Activated CD8-positive, alpha-beta T cell treated with anti-CD3 and anti-CD28 coated beads for 36 hours (primary cell): ENCODE measurements at regions of chr5 and their contacts with region 1.

Region 1: GRCh38 chr5:138128334-138128733 is 10.9 kb downstream of the NME5 start:
- DNase-seq: no peak
- ATAC-seq: no peak
- H3K4me3 Mint-ChIP-seq: no peak overlapping the region
- H3K27ac Mint-ChIP-seq: no peak overlapping the region
- H3K4me1 Mint-ChIP-seq: no peaks in the 10 kb centered on the region
- H3K27me3 Mint-ChIP-seq: peaks cover 2% of the 10 kb centered on the region
- CTCF ChIP-seq: no peak

Region 2: DNA sequence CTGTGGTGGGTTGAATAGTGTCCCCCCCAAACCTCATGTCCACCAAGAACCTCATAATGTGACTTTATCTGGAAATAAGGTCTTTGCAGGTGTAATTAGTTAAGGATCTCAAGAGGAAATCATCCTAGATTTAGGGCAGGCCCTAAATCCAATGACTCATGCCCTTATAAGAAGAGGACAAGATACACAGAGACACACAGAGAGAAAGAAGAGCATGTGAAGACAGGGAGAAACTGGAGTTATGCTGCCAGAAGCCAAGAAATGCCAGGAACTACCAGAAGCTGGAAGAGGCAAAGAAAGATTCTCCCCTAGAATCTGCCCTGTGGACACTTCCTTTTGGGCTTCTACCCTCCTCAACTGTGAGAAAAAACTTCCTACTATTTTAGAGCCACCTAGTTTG is 104.2 kb before region 1 on chr5:
- CTCF ChIA-PET with region 1: no interaction called
- POLR2A ChIA-PET with region 1: no interaction called
- intact Hi-C with region 1: no loop called
- DNase-seq: no peak
- ATAC-seq: no peak
- H3K4me3 Mint-ChIP-seq: no peak overlapping the region
- H3K27ac Mint-ChIP-seq: peak overlapping the region; percentile 4
- H3K4me1 Mint-ChIP-seq: peaks cover 63% of the 10 kb centered on the region
- H3K27me3 Mint-ChIP-seq: no peaks in the 10 kb centered on the region
- CTCF ChIP-seq: no peak

Region 3: GRCh38 chr5:138149530-138149929 is 21.2 kb after region 1 on chr5:
- CTCF ChIA-PET with region 1: interaction called, 13 read pairs
- POLR2A ChIA-PET with region 1: no interaction called
- intact Hi-C with region 1: no loop called
- DNase-seq: no peak
- ATAC-seq: no peak
- H3K4me3 Mint-ChIP-seq: no peak overlapping the region
- H3K27ac Mint-ChIP-seq: no peak overlapping the region
- H3K4me1 Mint-ChIP-seq: no peaks in the 10 kb centered on the region
- H3K27me3 Mint-ChIP-seq: no peaks in the 10 kb centered on the region
- CTCF ChIP-seq: no peak

Region 4: GRCh38 chr5:138159666-138160065 is 31.3 kb after region 1 on chr5:
- CTCF ChIA-PET with region 1: no interaction called
- POLR2A ChIA-PET with region 1: no interaction called
- intact Hi-C with region 1: no loop called
- DNase-seq: no peak
- ATAC-seq: no peak
- H3K4me3 Mint-ChIP-seq: no peak overlapping the region
- H3K27ac Mint-ChIP-seq: no peak overlapping the region
- H3K4me1 Mint-ChIP-seq: no peaks in the 10 kb centered on the region
- H3K27me3 Mint-ChIP-seq: no peaks in the 10 kb centered on the region
- CTCF ChIP-seq: no peak